AG04450 (cell line): ENCODE measurements at regions of chr11 and their contacts with region 1.

Region 1: DNA sequence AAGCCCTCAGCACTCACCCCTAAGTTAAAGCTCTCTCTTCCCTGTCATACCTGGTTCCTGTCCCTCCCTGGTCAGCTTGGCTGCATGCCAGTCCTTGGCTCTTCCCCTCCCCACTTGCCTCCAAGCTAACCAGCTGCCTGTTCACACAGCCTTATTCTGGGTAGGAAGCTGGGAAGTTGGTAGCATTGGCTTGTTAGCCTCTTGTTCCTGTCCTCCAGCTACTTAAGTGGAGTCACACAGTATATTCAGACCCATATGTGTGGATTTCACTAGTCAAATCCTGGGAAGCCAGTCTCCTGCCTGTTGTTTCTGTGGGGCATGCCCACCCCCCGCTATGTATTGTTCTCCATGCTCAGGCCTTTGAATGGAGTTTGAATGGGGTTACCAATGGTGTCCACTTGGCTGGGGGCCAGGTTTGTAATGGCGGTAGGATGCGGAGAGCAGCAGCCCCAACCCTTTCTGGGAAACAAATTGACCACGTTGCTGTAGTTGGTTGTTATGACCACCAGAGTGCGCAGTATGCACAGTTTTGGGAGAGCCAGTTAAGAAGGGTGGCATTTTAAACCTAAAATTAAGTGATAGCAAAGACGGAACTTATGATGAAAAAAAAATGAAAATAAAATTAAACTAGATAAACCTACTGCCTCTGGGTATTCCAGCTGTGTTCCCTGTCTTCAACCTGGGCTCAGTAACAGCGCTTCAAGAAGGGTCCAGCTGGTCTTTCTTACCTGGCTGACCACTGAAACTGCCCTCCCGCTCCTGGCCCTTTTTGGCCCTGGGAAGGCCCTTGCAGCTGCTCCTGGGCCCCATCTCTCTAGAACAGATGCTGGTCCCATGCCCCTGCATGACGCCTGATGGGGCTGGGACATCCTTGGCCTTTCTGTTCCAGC is 10.7 kb upstream of the RPS3 start:
- DNase-seq: peak; percentile 45
- H3K4me3 ChIP-seq: no peak overlapping the region
- H3K27ac ChIP-seq: peak overlapping the region; percentile 11
- H3K27me3 ChIP-seq: peaks cover 9% of the 10 kb centered on the region
- CTCF ChIP-seq: peak; percentile 86

Region 2: DNA sequence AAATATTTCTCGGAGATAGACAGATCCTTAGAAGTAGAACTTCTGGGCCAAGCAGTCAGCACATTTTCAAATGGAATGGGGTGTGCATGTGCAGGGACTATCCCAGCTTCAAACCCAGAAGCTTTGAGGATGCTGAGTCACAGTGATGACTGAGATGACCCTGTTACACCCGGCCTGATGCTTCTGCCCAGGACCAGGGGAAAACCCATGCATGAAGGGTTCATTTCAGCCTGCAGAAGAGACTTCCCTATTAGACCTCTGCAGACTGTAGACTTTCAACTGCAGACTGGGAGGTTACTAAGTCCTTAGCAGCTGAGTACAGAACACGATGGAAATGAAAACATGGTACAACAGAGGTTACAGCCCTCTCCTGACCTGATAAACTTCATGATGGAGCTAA is 288.3 kb before region 1 on chr11:
- CTCF ChIA-PET with region 1: no interaction called
- POLR2A ChIA-PET with region 1: no interaction called
- DNase-seq: peak; percentile 10
- H3K4me3 ChIP-seq: no peak overlapping the region
- H3K27ac ChIP-seq: no peak overlapping the region
- H3K27me3 ChIP-seq: peaks cover 30% of the 10 kb centered on the region
- CTCF ChIP-seq: no peak

Region 3: DNA sequence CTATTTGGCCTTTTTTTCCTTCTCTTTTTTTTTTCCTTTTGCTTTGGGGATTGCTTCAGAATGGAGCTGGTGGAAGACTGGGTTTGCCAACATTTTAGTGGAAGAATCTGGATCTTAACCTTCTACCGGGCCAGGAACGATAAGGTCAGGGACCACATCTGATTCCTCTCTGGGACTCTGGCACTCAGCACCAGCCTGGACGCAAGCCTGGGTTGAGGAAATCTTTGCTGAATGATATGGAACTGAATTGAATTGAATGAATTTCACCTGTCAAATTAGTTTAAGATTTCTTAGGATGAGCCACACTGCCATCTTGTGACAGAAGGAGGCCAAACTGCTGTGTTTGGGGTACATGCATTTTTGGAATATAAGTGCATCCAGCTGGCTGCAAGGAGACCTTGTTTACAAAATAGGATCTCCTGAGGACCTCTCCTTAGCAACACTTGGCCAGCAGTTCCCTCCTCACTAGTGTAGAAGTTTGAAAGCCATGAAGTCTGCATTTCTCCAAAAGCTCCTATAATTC is 117.7 kb before region 1 on chr11:
- CTCF ChIA-PET with region 1: interaction called, 157 read pairs
- POLR2A ChIA-PET with region 1: no interaction called
- DNase-seq: no peak
- H3K4me3 ChIP-seq: no peak overlapping the region
- H3K27ac ChIP-seq: no peak overlapping the region
- H3K27me3 ChIP-seq: no peaks in the 10 kb centered on the region
- CTCF ChIP-seq: peak; percentile 42

Region 4: DNA sequence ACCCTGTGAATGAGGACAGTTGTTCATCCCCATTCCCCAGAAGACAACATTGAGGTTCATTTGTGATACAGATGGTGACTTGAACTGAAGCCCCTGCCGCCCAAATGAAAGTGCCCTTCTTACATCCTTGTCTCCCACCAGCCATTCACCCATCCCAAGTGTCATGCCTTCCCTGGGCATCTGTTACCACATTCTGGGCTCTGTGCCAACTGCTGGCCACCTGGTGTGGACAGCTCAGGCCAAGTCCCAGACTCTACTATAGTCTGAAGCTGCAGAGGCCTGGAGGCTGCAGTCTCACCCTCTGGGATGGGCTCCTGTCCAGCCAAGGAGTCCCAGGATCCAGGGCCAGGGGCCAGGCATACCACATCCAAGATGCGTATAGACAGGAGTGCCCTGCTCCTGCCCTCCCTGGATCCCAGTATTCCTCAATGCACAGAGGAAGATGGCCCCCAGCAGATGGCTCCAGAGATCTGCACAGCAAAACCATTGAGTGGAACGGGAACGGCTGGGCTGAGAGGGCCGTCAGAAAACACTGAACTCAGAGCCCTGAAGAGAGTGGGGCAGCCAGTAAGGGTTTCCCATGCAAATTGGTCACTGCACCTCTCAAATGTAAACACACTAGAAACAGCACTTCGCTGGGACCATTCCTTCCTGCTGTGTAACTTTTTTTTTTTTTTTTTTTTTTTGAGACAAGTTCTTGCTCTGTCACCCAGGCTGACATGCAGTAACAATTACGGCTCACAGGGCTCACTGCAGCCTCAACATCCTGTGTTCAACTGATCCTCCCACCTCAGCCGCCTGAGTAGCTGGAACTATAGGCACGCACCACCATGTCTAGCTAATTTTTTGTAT is 60.0 kb before region 1 on chr11:
- CTCF ChIA-PET with region 1: interaction called, 105 read pairs
- POLR2A ChIA-PET with region 1: interaction called, 3 read pairs
- DNase-seq: no peak
- H3K4me3 ChIP-seq: no peak overlapping the region
- H3K27ac ChIP-seq: peak overlapping the region; percentile 34
- H3K27me3 ChIP-seq: no peaks in the 10 kb centered on the region
- CTCF ChIP-seq: peak; percentile 86

Region 5: DNA sequence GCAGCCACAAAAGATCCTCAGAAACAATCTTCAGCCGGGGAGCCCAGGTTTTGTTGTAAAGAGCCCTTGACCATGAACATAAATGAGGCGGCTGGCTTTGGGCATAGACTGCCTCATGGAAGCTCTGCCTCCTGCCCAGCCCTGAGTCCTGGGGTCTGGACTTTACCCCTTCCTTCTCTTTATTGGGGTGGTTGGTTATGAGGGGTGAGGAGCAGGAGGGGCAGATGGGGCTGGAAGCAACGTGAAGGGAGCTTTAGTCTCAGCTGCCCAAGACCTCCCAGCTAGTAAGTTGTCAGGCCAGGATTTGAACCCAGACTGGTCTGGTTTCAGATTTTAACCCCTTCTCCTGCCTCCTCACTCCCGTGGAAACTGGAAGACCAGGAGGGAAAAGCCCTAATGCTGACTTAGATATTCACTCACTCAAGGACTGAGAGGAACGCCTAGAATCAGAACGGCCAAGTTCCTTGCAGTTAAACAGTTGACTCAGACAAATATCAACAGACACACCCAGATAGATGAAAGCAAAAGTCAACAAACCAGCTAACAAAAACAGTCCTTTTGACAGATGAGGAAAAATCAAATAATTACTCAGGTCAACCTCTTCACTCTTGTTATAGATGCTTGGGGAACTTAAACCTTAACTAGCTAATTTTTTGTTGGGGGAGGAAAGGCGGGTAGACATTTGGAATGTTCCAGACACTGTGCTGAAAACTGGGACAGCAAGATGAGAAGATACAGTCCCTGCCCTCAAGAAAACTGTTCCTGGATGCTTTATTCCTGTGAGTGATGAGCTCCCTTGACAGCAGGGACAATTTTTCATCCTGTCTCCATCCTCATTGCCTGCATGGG is 16.5 kb before region 1 on chr11:
- CTCF ChIA-PET with region 1: interaction called, 10 read pairs
- POLR2A ChIA-PET with region 1: no interaction called
- DNase-seq: no peak
- H3K4me3 ChIP-seq: no peak overlapping the region
- H3K27ac ChIP-seq: no peak overlapping the region
- H3K27me3 ChIP-seq: peaks cover 4% of the 10 kb centered on the region
- CTCF ChIP-seq: no peak

Region 6: DNA sequence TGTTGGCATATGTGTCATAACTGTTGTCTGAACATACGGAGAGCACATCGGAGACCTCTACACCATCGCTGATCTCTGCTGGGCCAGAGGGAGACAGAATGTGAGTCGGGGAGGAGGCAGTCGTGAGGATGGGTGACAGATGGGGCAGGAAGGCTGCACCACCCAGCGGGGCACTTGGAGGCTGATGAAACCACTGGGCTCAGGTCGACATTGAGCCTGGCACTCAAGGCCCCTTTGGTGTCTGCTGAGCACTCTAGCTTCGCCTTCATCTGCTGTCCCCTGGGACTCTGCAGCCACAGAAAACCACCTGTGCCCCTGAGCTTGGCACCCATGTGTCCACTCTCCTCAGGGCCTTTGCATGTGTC is 46.9 kb after region 1 on chr11:
- CTCF ChIA-PET with region 1: no interaction called
- POLR2A ChIA-PET with region 1: no interaction called
- DNase-seq: no peak
- H3K4me3 ChIP-seq: no peak overlapping the region
- H3K27ac ChIP-seq: no peak overlapping the region
- H3K27me3 ChIP-seq: peaks cover 42% of the 10 kb centered on the region
- CTCF ChIP-seq: no peak

Region 7: GRCh38 chr11:75532200-75533048 is 143.8 kb after region 1 on chr11:
- CTCF ChIA-PET with region 1: interaction called, 62 read pairs
- POLR2A ChIA-PET with region 1: no interaction called
- DNase-seq: no peak
- H3K4me3 ChIP-seq: no peak overlapping the region
- H3K27ac ChIP-seq: no peak overlapping the region
- H3K27me3 ChIP-seq: peaks cover 17% of the 10 kb centered on the region
- CTCF ChIP-seq: peak; percentile 89